ENCODE measurements at regions of chr1 and their contacts with region 1.

Region 1: DNA sequence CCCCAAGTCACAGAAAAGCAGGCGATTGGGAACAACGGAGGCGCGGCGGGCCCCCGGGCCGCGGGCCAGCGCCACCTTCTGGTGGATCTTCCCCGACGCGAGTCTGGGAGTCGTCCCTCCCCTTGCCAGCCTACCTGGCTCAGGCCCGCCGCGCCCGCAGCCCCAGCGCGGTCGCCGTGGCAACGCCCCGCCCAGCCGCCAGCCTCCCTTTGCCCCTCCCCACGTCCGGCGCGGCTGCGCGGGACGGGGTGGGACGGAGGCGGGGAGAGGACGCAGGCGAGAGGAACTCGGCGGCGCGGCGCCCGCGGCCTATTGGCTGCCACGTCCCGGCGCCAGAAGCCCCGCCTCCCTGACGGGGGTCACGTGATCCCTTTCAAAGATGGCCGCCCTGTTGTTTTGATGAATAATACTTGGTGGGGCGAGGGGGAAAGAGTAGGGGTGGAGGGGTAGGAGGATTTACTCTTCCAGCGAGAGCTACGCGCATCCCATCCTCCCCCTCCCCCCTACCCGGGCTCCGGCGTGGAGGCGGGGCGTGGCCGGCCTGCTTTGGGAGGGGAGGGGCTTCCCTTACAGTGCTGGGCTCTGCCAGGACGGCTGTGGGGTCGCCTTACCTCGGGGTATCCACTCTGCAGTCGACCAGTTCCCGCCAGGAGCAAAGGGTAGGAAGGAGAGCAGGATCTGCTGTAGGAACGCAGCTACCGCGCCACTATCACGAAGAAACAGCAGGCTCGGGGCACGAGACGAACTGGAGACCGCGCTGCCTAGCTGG is at the start of gene UBE4B:
- DNase-seq: peak; percentile 98
- H3K4me3 Mint-ChIP-seq: peak within 1 kb of the TSS; percentile 94
- H3K27ac Mint-ChIP-seq: peak within 1 kb of the TSS; percentile 88
- H3K4me1 Mint-ChIP-seq: peaks cover 24% of the 10 kb centered on the region
- H3K27me3 Mint-ChIP-seq: no peaks in the 10 kb centered on the region
- total RNA-seq, gene UBE4B: 20.1 to 21.3 TPM

Region 2: GRCh38 chr1:9651565-9652378 is 381.0 kb before region 1 on chr1 and contains the start of gene PIK3CD:
- CTCF ChIA-PET with region 1: no interaction called
- intact Hi-C with region 1: loop called (anchors 2 kb)
- DNase-seq: peak; percentile 63
- H3K4me3 Mint-ChIP-seq: peak within 1 kb of the TSS; percentile 99
- H3K27ac Mint-ChIP-seq: peak within 1 kb of the TSS; percentile 100
- H3K4me1 Mint-ChIP-seq: peaks cover 46% of the 10 kb centered on the region
- H3K27me3 Mint-ChIP-seq: no peaks in the 10 kb centered on the region
- total RNA-seq, gene PIK3CD: 96.6 to 101 TPM

Region 3: DNA sequence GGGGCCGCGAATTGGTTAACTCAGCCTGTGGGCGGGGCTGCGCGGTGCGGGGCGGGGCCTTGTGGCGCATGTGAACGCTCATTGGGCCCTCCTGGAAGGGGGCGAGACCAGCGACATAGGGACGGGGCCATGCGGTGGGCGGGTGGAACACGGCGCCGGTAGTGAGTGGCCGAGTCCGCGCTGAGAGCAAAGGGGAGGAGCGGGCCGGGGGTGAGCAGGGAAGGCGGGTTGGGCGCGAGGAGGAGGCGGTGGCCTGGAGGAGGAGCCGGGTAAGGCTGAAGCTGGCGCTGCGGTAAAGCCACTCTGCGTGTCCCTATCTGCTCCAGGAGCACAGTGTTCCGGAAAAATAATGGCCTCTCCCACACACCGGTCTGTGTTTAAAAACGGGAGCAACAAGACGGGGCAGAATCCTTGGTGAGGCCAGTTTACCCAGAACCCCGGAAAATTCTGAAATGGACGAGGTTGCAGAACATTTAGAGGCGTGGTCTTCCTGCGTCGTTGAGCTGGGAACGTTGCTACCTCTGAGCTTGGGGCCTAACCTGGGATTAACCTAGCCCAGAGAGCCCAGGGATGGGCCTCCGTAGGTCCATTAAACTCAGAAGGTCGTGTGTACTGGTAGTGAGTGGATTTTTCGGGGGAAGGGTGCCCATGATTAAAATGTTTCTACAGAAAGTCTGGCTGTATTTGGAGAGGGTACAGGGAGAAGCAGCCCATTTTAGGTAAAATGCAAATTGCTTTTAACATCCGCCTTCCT is 122.2 kb before region 1 on chr1:
- CTCF ChIA-PET with region 1: no interaction called
- intact Hi-C with region 1: loop called (anchors 1 kb)
- DNase-seq: peak; percentile 100
- H3K4me3 Mint-ChIP-seq: peak overlapping the region; percentile 95
- H3K27ac Mint-ChIP-seq: peak overlapping the region; percentile 93
- H3K4me1 Mint-ChIP-seq: peaks cover 20% of the 10 kb centered on the region
- H3K27me3 Mint-ChIP-seq: no peaks in the 10 kb centered on the region

Region 4: DNA sequence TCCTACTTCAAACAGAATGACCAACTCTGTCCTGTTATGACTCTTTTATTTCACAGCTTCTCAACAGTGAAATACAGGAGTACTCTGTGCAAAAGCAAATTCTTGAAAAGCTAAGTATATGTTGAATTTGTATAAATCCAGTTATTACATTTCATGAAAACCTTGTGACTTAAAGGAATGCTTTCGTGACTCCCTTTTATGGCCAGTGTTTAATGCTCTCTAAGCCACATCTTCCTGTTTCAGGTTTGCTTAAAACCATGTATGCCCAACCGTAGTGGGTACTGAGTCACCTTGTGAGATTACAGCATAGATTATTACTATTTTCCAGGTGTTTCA is 137.4 kb after region 1 on chr1:
- CTCF ChIA-PET with region 1: no interaction called
- intact Hi-C with region 1: loop called (anchors 1 kb)
- DNase-seq: peak; percentile 48
- H3K4me3 Mint-ChIP-seq: no peak overlapping the region
- H3K27ac Mint-ChIP-seq: peak overlapping the region; percentile 87
- H3K4me1 Mint-ChIP-seq: peaks cover 40% of the 10 kb centered on the region
- H3K27me3 Mint-ChIP-seq: no peaks in the 10 kb centered on the region

Region 5: DNA sequence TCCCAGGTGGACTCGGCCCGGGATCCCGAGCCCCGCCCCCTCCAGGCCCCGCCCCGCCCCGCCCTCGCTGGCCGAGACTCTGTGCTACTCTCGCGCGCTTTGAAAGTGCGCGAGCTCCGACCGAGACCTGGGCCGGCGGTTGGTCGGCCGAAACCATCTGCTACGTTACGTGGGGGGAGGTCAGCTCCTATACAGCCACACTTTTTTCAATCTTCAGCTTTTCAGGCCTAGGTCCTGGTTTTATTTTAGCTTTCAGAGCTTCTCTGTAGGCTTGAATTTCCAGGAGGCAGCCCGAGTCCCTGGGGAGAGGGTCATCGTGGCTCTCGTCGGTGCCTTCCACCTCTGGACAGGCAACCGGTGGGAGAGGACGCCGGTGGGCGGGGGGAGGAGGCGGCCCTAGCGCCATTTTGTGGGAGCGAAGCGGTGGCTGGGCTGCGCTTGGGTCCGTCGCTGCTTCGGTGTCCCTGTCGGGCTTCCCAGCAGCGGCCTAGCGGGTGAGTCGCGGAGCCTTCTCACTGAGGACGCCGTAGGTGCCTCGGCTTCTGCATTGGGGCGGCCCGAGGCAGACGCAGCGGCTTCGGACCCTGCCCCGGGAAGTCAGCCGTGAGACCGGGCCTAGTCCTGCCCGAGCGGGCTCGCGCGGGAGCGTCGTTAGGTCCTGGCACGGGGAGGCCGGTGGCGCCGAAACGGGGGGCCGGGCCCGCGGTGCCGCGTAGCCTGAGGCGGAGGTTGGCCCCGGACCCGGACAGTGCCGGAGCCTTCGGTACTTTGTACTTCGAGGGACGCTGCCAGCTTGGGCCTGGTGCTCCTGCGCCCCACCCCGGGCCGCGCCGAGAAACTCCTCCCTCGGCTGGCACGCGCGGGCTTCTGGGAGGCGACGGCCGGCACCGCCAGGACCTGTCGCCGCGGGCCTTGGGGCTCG is 979.7 kb after region 1 on chr1 and contains the start of gene TARDBP:
- CTCF ChIA-PET with region 1: no interaction called
- intact Hi-C with region 1: loop called (anchors 2 kb)
- DNase-seq: peak; percentile 92
- H3K4me3 Mint-ChIP-seq: peak within 1 kb of the TSS; percentile 88
- H3K27ac Mint-ChIP-seq: peak within 1 kb of the TSS; percentile 98
- H3K4me1 Mint-ChIP-seq: peaks cover 29% of the 10 kb centered on the region
- H3K27me3 Mint-ChIP-seq: no peaks in the 10 kb centered on the region
- total RNA-seq, gene TARDBP: 158 to 159 TPM

Measured in activated naive CD4-positive, alpha-beta T cell treated with anti-CD3 and anti-CD28 coated beads for 36 hours (primary cell).